HepG2 (cell line): ENCODE measurements at regions of chr3 and their contacts with region 1.

Region 1: DNA sequence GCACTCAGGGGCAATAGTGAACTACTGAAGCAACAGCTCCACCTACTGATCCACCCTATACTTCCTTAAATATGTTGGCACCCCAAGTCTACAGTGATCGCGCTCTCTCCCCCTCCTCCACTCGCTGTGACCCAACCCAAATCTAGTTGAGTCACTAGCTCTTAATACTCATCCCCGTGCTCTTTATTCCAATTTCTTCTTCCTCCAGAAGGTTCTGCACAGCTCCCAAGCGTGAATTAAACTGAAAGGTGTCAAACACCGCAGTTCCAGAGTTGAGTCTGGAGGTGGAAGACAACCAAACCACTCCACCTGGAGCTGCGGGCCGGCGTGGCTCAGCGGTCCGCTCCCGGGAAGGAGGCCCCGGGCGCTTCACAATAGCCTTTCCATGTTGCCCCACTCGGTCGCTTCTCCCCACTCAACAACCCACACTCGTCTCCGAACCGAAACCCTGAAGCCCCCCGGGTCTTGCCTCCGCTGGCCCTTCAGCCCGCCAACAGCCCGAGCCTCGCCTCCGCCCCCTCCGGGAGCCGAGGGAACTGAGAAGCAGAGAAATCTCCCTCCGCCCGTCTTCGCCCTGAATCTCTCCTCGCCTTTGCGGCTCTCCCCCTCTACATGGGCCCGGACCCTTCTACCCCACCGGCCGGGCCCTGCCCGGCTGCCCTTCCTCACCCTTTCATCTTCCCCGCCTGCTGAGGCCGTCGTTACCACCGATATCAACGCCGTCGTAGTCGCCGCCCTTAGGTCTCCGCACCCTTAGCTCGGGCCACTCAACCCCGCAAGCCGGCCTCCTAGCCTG is 578 bp downstream of the NAA50 start:
- DNase-seq: peak; percentile 79
- ATAC-seq: peak; percentile 73
- H3K4me3 ChIP-seq: peak overlapping the region; percentile 92 to 100 (median 97)
- H3K27ac ChIP-seq: peak overlapping the region; percentile 100
- H3K4me1 ChIP-seq: peaks cover 60% of the 10 kb centered on the region
- H3K27me3 ChIP-seq: no peaks in the 10 kb centered on the region; a peak in 1 of 5 replicates
- CTCF ChIP-seq: peak; percentile 90
- EP300 ChIP-seq: 0 out of 4 replicates have a peak, but pooled peaks of 1 of the 2 experiments have one; percentile 5
- POLR2A ChIP-seq: 0 out of 4 replicates have a peak, but pooled peaks of 1 of the 2 experiments have one; percentile 10
- RAD21 ChIP-seq: 0 out of 2 replicates have a peak, but pooled peaks have one; percentile 21

Region 2: GRCh38 chr3:113495035-113495434 is 250.4 kb before region 1 on chr3:
- CTCF ChIA-PET with region 1: no interaction called
- POLR2A ChIA-PET with region 1: no interaction called
- in situ Hi-C with region 1: no loop called
- intact Hi-C with region 1: loop called (anchors 2 kb)
- DNase-seq: peak; percentile 34
- ATAC-seq: peak; percentile 63
- H3K4me3 ChIP-seq: no peak overlapping the region
- H3K27ac ChIP-seq: no peak overlapping the region
- H3K4me1 ChIP-seq: no peaks in the 10 kb centered on the region
- H3K27me3 ChIP-seq: no peaks in the 10 kb centered on the region
- CTCF ChIP-seq: peak; percentile 54
- EP300 ChIP-seq: no peak
- POLR2A ChIP-seq: no peak
- RAD21 ChIP-seq: peak; percentile 53; the same call in 1 of the 2 replicates

Region 3: GRCh38 chr3:113663324-113663750 is 82.1 kb before region 1 on chr3:
- CTCF ChIA-PET with region 1: no interaction called
- POLR2A ChIA-PET with region 1: interaction called, 22 read pairs
- in situ Hi-C with region 1: no loop called
- intact Hi-C with region 1: no loop called
- DNase-seq: peak; percentile 94
- ATAC-seq: peak; percentile 97
- H3K4me3 ChIP-seq: peak overlapping the region; percentile 11 to 33 (median 30); a peak in 4 of 6 replicates
- H3K27ac ChIP-seq: peak overlapping the region; percentile 88
- H3K4me1 ChIP-seq: peaks cover 42% of the 10 kb centered on the region
- H3K27me3 ChIP-seq: no peaks in the 10 kb centered on the region
- CTCF ChIP-seq: no peak
- EP300 ChIP-seq: peak in 1 of 2 experiments; percentile 82; a peak in 2 of 4 replicates
- POLR2A ChIP-seq: 0 out of 4 replicates have a peak, but pooled peaks of 1 of the 2 experiments have one; percentile 15
- RAD21 ChIP-seq: no peak

Region 4: GRCh38 chr3:113791381-113791780 is 45.9 kb after region 1 on chr3:
- CTCF ChIA-PET with region 1: no interaction called
- POLR2A ChIA-PET with region 1: no interaction called
- in situ Hi-C with region 1: no loop called
- intact Hi-C with region 1: loop called (anchors 5 kb)
- DNase-seq: no peak
- ATAC-seq: no peak
- H3K4me3 ChIP-seq: no peak overlapping the region
- H3K27ac ChIP-seq: no peak overlapping the region
- H3K4me1 ChIP-seq: peaks cover 4% of the 10 kb centered on the region; the same call in 1 of the 2 replicates
- H3K27me3 ChIP-seq: no peaks in the 10 kb centered on the region
- CTCF ChIP-seq: no peak
- EP300 ChIP-seq: no peak
- POLR2A ChIP-seq: no peak
- RAD21 ChIP-seq: no peak

Region 5: GRCh38 chr3:114056130-114057010 is 310.9 kb after region 1 on chr3 and contains the starts of genes CCDC191 and QTRT2:
- CTCF ChIA-PET with region 1: no interaction called
- POLR2A ChIA-PET with region 1: interaction called, 3 read pairs
- in situ Hi-C with region 1: no loop called
- intact Hi-C with region 1: loop called (anchors 2 kb)
- DNase-seq: peak; percentile 98
- ATAC-seq: peak; percentile 99
- H3K4me3 ChIP-seq: peak within 1 kb of the TSS; percentile 83 to 93 (median 84)
- H3K27ac ChIP-seq: peak within 1 kb of the TSS; percentile 73
- H3K4me1 ChIP-seq: peaks cover 24% of the 10 kb centered on the region
- H3K27me3 ChIP-seq: no peaks in the 10 kb centered on the region; a peak in 1 of 5 replicates
- CTCF ChIP-seq: 0 out of 2 replicates have a peak, but pooled peaks have one; percentile 6
- EP300 ChIP-seq: peak in 1 of 2 experiments; percentile 37; a peak in 2 of 4 replicates
- POLR2A ChIP-seq: peak; percentile 74 to 76
- RAD21 ChIP-seq: no peak
- total RNA-seq, gene CCDC191: 1.2 and 1.4 TPM in 2 replicates
- total RNA-seq, gene QTRT2: 33.4 and 38.0 TPM in 2 replicates